GM12878 (cell line): ENCODE measurements at regions of chr3 and their contacts with region 1.

Region 1: GRCh38 chr3:5304789-5305683 is 117.5 kb downstream of the EDEM1 start:
- DNase-seq: no peak
- ATAC-seq: peak; percentile 95
- H3K4me3 ChIP-seq: no peak overlapping the region
- H3K27ac ChIP-seq: no peak overlapping the region
- H3K4me1 ChIP-seq: no peaks in the 10 kb centered on the region
- H3K27me3 ChIP-seq: no peaks in the 10 kb centered on the region
- CTCF ChIP-seq: peak; percentile 68 to 78 (median 75)
- EP300 ChIP-seq: no peak
- POLR2A ChIP-seq: no peak
- RAD21 ChIP-seq: peak; percentile 85

Region 2: GRCh38 chr3:5016218-5017161 is 288.5 kb before region 1 on chr3:
- CTCF ChIA-PET with region 1: no interaction called
- POLR2A ChIA-PET with region 1: no interaction called
- RAD21 ChIA-PET with region 1: no interaction called
- SMC1A ChIA-PET with region 1: no interaction called
- in situ Hi-C with region 1: no loop called
- intact Hi-C with region 1: no loop called
- DNase-seq: no peak
- ATAC-seq: peak; percentile 63
- H3K4me3 ChIP-seq: no peak overlapping the region
- H3K27ac ChIP-seq: no peak overlapping the region
- H3K4me1 ChIP-seq: peaks cover 43% of the 10 kb centered on the region
- H3K27me3 ChIP-seq: no peaks in the 10 kb centered on the region
- CTCF ChIP-seq: no peak
- EP300 ChIP-seq: peak; percentile 69 to 76; a peak in 2 of 4 replicates
- POLR2A ChIP-seq: no peak
- RAD21 ChIP-seq: no peak

Region 3: DNA sequence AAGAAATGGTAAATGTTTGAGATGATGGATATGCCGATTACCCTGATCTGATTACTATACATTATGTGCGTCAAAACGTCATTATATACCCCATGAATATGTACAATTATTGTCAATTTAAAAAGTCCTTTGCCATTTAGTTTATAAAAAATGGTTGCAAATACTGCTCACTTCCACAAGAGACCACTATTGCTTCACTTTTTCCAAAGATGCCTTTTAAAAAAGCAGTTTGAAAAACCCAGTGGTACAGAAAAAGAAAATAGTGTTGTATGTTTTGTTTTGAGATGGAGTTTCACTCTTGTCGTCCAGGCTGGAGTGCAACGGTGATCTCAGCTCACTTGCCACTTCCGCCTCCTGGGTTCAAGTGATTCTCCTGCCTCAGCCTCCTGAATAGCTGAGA is 78.3 kb before region 1 on chr3:
- CTCF ChIA-PET with region 1: interaction called, 3 read pairs
- POLR2A ChIA-PET with region 1: no interaction called
- RAD21 ChIA-PET with region 1: interaction called, 13 read pairs
- SMC1A ChIA-PET with region 1: no interaction called
- in situ Hi-C with region 1: no loop called
- intact Hi-C with region 1: loop called (anchors 2 kb)
- DNase-seq: no peak
- ATAC-seq: peak; percentile 26
- H3K4me3 ChIP-seq: no peak overlapping the region
- H3K27ac ChIP-seq: no peak overlapping the region
- H3K4me1 ChIP-seq: no peaks in the 10 kb centered on the region
- H3K27me3 ChIP-seq: no peaks in the 10 kb centered on the region
- CTCF ChIP-seq: peak; percentile 37 to 60 (median 45); a peak in 5 of 6 replicates
- EP300 ChIP-seq: no peak
- POLR2A ChIP-seq: no peak
- RAD21 ChIP-seq: peak; percentile 88